ENCODE measurements at regions of chrX and their contacts with region 1.

Region 1: GRCh38 chrX:106302242-106302662 is 134.1 kb downstream of the PWWP3B start:
- DNase-seq: no peak
- H3K4me3 ChIP-seq: no peak overlapping the region
- H3K27ac ChIP-seq: no peak overlapping the region
- H3K4me1 ChIP-seq: no peaks in the 10 kb centered on the region
- H3K27me3 ChIP-seq: no peaks in the 10 kb centered on the region
- CTCF ChIP-seq: no peak
- POLR2A ChIP-seq: no peak

Region 2: GRCh38 chrX:106249706-106250379 is 52.4 kb before region 1 on chrX:
- intact Hi-C with region 1: loop called (anchors 10 kb)
- DNase-seq: no peak
- H3K4me3 ChIP-seq: no peak overlapping the region
- H3K27ac ChIP-seq: no peak overlapping the region
- H3K4me1 ChIP-seq: no peaks in the 10 kb centered on the region
- H3K27me3 ChIP-seq: no peaks in the 10 kb centered on the region
- CTCF ChIP-seq: no peak
- POLR2A ChIP-seq: no peak